ENCODE measurements at regions of chr14 and their contacts with region 1.

Region 1: GRCh38 chr14:28294834-28295440 is 471.6 kb upstream of the FOXG1 start:
- DNase-seq: peak; percentile 52
- H3K4me3 ChIP-seq: no peak overlapping the region
- H3K27ac ChIP-seq: no peak overlapping the region
- H3K4me1 ChIP-seq: no peaks in the 10 kb centered on the region
- H3K27me3 ChIP-seq: no peaks in the 10 kb centered on the region
- CTCF ChIP-seq: peak; percentile 50 to 66

Region 2: GRCh38 chr14:28375295-28375694 is 80.4 kb after region 1 on chr14:
- CTCF ChIA-PET with region 1: no interaction called
- dilution Hi-C with region 1: no loop called
- in situ Hi-C with region 1: no loop called
- intact Hi-C with region 1: loop called (anchors 5 kb)
- DNase-seq: peak; percentile 30
- H3K4me3 ChIP-seq: no peak overlapping the region
- H3K27ac ChIP-seq: no peak overlapping the region
- H3K4me1 ChIP-seq: no peaks in the 10 kb centered on the region
- H3K27me3 ChIP-seq: no peaks in the 10 kb centered on the region
- CTCF ChIP-seq: peak; percentile 55 to 80

Region 3: GRCh38 chr14:28596391-28596790 is 301.5 kb after region 1 on chr14:
- CTCF ChIA-PET with region 1: no interaction called
- dilution Hi-C with region 1: no loop called
- in situ Hi-C with region 1: loop called (anchors 10 kb)
- intact Hi-C with region 1: loop called (anchors 2 kb)
- DNase-seq: peak; percentile 17
- H3K4me3 ChIP-seq: no peak overlapping the region
- H3K27ac ChIP-seq: no peak overlapping the region
- H3K4me1 ChIP-seq: no peaks in the 10 kb centered on the region
- H3K27me3 ChIP-seq: no peaks in the 10 kb centered on the region
- CTCF ChIP-seq: peak; percentile 40 to 66

Region 4: DNA sequence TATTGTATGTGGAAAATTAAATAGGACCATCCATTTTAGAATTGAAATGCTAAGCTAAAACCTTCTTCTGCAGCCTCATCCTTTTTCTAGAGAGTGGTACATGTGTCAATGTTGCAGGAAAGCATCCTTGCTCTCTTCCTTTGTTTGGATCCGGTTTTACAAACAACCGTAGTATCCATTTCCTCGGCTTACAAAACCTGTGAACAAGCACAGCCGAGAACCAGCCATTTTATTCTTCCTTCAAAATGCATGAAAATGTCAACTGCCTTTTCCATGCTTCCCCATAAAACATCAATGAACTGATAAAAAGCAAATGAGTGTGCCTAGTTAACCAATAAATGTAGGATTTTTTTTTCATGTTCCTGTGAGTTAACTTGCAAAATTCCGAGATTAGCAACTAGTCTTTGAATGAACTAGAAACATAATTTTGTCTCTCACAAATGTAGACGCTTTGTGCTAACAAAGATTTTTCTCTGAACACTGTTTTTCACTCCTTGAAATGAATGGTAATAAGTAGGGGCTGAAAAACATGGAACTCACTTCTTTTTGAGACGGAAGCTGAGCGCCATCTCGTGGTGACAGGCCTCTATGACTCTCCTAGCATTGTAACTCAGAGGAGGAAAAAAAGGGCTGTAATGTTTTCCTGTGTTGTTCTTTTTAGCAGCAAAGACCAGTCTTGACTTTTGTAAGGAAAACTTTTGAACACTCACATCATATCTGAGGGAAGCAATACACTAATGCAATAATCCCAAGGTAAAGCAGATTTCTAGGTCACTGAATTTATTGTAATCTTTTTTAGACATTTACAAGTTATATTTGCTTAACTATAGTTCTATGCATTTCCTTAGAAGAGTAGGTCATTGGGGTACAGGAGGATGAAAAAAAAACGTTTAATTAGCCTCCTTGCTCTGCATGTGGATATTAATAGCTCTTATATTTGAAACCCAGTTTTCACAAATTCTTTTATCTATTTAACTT is 314.2 kb after region 1 on chr14:
- CTCF ChIA-PET with region 1: no interaction called
- dilution Hi-C with region 1: no loop called
- in situ Hi-C with region 1: no loop called
- intact Hi-C with region 1: loop called (anchors 1 kb)
- DNase-seq: peak; percentile 37
- H3K4me3 ChIP-seq: no peak overlapping the region
- H3K27ac ChIP-seq: no peak overlapping the region
- H3K4me1 ChIP-seq: no peaks in the 10 kb centered on the region
- H3K27me3 ChIP-seq: no peaks in the 10 kb centered on the region
- CTCF ChIP-seq: peak; percentile 91

Region 5: DNA sequence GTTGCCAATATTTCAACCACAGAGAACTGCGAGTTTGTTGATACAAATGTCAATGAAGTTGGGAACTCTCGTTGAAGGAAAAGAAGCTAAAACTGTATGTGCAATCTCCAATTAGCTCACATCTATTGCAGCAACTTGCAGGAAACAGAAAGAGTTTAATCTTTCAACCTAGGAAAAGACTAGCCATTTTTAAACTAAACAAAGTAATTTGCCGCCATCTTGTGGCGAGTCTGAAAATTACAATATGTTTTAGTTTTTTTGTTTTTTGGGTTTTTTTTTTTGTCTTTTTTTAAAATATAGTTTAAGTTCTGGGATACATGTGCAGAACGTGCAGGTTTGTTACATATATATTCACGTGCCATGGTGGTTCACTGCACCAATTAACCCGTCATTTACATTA is 340.4 kb after region 1 on chr14:
- CTCF ChIA-PET with region 1: no interaction called
- dilution Hi-C with region 1: no loop called
- in situ Hi-C with region 1: no loop called
- intact Hi-C with region 1: loop called (anchors 1 kb)
- DNase-seq: peak; percentile 27
- H3K4me3 ChIP-seq: no peak overlapping the region
- H3K27ac ChIP-seq: no peak overlapping the region
- H3K4me1 ChIP-seq: no peaks in the 10 kb centered on the region
- H3K27me3 ChIP-seq: no peaks in the 10 kb centered on the region
- CTCF ChIP-seq: peak; percentile 31 to 43